Activated CD4-positive, alpha-beta T cell treated with anti-CD3 and anti-CD28 coated beads, Interleukin-2, amount 10 ng/mL, durations not matched to agents 24 days and 14 days (primary cell): ENCODE measurements at regions of chr17 and their contacts with region 1.

Region 1: GRCh38 chr17:81238817-81239600 is at the starts of genes NDUFAF8 and TEPSIN:
- DNase-seq: peak; percentile 99
- H3K4me3 Mint-ChIP-seq: peak within 1 kb of the TSS; percentile 95
- H3K27ac Mint-ChIP-seq: peak within 1 kb of the TSS; percentile 97
- H3K4me1 Mint-ChIP-seq: peaks cover 23% of the 10 kb centered on the region
- H3K27me3 Mint-ChIP-seq: no peaks in the 10 kb centered on the region
- total RNA-seq, gene NDUFAF8: 73.6 and 77.1 TPM in 2 replicates
- total RNA-seq, gene TEPSIN: 36.4 and 40.0 TPM in 2 replicates

Region 2: GRCh38 chr17:81018044-81018802 is 220.8 kb before region 1 on chr17:
- intact Hi-C with region 1: loop called (anchors 10 kb)
- DNase-seq: peak; percentile 86
- H3K4me3 Mint-ChIP-seq: peak overlapping the region; percentile 72
- H3K27ac Mint-ChIP-seq: peak overlapping the region; percentile 95
- H3K4me1 Mint-ChIP-seq: peaks cover 30% of the 10 kb centered on the region
- H3K27me3 Mint-ChIP-seq: no peaks in the 10 kb centered on the region

Region 3: DNA sequence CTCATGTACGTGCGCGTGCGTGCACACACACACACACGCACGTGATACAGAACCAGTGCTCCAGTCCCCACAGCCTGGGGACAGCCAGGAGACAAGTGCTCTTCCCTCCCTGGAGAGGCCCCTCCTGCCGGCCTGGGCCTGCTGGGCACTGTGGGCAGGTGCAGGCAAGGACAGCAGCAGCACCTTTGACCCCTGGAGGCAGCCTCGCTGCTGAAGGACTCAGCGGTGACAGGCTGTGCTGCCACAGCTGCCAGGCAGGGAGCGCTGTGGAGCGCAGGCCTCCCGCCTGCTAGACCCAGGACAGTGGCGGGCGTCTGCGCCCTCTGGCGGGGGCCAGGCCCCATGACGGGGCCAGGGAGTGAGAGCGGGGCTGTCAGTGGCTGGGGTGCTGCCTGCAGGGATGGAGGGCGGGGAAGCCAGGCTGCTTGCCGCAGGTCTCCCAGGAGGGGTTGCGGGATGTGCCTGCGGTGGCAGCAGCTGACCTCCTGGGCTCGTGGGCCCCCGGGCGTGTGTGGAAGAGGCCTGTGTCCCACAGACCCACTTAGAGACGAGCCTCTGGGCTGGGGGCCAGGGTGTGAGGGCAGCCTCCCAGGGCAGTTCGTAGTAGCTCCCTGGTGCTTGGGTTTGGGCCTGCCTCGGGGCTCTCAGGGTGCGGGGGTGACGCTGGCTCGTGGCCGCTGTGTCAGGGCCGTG is 137.2 kb before region 1 on chr17:
- intact Hi-C with region 1: loop called (anchors 5 kb)
- DNase-seq: peak; percentile 97
- H3K4me3 Mint-ChIP-seq: no peak overlapping the region
- H3K27ac Mint-ChIP-seq: no peak overlapping the region
- H3K4me1 Mint-ChIP-seq: peaks cover 2% of the 10 kb centered on the region
- H3K27me3 Mint-ChIP-seq: no peaks in the 10 kb centered on the region

Region 4: DNA sequence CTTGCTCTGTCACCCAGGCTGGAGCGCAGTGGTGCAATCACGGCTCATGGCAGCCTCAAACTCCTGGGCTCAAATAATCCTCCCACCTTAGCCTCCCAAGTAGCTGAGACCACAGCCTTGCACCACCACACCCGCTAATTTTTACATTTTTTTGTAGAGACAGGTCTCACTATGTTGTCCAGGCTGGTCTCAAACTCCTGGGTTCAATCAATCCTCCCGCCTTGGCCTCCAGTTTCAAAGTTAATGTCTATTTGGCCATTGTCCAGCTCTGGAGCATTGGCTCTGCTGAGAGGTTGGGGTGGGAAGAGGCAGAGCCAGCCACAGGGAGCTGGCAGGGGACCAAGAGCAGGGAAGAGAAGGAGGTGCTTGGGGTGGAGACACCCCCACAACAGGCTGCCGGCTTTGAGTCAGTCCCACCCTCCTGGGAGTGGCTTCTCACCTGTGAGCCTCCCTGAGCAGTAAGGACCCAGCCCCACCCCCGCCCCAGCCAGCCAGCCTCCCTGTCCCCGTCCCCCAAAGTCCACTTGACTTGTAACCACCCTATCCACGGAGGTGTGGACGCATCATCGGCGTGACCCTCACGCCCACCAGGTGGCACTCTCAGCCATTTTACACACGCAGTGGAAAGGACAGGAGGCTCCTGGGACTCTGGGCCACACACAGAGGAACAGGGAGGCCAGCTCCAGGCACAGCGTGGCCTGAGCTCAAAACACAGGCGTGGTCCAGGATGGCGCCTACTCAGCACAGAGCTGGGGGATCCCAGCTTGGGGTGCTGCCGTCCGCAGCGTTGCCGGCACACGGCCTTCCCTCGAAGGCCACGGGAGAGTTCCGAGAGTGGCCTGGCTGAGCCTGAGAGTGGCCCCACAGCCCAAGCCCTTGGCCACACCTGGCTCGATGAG is 96.5 kb before region 1 on chr17:
- intact Hi-C with region 1: loop called (anchors 1 kb)
- DNase-seq: peak; percentile 89
- H3K4me3 Mint-ChIP-seq: no peak overlapping the region
- H3K27ac Mint-ChIP-seq: no peak overlapping the region
- H3K4me1 Mint-ChIP-seq: no peaks in the 10 kb centered on the region
- H3K27me3 Mint-ChIP-seq: no peaks in the 10 kb centered on the region

Region 5: GRCh38 chr17:81222906-81223761 is 15.9 kb before region 1 on chr17 and contains the start of gene CEP131:
- intact Hi-C with region 1: loop called (anchors 1 kb)
- DNase-seq: peak; percentile 100
- H3K4me3 Mint-ChIP-seq: peak within 1 kb of the TSS; percentile 85
- H3K27ac Mint-ChIP-seq: peak within 1 kb of the TSS; percentile 92
- H3K4me1 Mint-ChIP-seq: peaks cover 16% of the 10 kb centered on the region
- H3K27me3 Mint-ChIP-seq: peaks cover 2% of the 10 kb centered on the region
- total RNA-seq, gene CEP131: 15.6 and 18.0 TPM in 2 replicates

Region 6: GRCh38 chr17:81253358-81254131 is 14.5 kb after region 1 on chr17:
- intact Hi-C with region 1: no loop called
- DNase-seq: peak; percentile 86
- H3K4me3 Mint-ChIP-seq: no peak overlapping the region
- H3K27ac Mint-ChIP-seq: peak overlapping the region; percentile 3
- H3K4me1 Mint-ChIP-seq: peaks cover 10% of the 10 kb centered on the region
- H3K27me3 Mint-ChIP-seq: no peaks in the 10 kb centered on the region

Region 7: DNA sequence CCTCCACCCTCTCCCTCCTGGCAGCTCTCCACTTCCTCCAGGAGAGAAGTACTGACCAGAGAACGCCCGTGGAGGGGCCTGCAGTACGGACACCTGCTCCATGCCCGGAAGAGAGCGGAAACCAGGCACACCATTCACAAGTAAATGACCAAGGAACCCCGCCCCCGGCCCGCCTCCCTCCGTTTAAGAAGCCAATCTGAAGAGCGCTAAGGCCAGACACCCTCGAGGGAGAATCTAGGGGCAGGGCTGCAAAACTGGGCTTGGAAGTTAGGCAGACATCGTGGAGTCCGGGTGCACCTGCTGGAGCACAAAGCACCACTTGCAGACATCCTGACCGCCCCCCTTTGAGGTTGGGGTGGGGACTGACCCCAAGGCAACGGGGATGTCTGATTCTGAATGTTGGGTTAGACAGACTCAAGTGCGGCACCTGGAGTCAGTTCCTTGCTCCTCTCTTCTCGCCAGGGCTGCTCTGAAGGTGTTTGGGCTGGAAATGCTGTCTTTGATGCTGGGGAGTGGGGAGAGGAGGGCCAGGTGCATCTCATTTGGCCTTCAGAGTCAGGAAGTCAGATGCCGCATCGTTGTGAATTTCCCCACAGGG is 314.1 kb after region 1 on chr17:
- intact Hi-C with region 1: loop called (anchors 1 kb)
- DNase-seq: peak; percentile 92
- H3K4me3 Mint-ChIP-seq: peak overlapping the region; percentile 91
- H3K27ac Mint-ChIP-seq: peak overlapping the region; percentile 94
- H3K4me1 Mint-ChIP-seq: peaks cover 24% of the 10 kb centered on the region
- H3K27me3 Mint-ChIP-seq: no peaks in the 10 kb centered on the region